ENCODE measurements at regions of chr10 and their contacts with region 1.

Region 1: DNA sequence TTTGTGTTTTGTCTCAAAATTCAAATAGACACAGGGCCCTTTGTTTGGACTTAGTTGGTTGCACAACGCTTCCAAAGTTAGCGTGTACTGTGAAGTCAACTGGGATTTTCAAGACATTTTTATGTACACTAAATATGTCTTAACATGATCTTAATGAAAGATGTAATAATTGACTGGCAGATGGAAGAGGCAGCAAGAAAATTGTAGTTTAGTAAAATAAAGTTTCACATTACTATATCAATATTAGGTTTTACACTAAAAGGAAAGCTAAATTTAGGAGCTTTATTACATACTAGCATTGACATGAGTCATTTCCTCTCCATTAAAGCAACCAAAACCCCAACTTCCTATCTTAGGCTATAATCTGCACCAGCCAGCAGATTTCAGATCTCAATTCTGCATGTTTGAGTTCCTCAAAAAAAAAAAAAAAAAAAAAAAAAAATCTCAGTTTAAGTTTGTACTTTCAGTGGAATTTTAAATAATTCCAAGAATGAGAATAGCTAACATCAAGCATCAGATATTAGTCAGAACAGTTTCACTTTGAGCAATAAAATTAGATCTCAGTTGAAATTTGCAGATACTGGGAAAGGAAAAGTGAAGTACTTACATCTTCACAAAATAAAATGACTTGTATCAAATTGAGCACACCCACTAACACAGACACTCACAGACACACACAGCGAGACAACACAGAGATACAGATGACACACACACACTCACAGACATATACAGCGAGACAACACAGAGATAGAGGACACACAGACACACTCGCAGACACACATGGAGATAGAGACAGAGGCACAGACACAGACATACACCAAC is 346.6 kb upstream of the KLF6 start:
- DNase-seq: peak; percentile 43
- H3K4me3 Mint-ChIP-seq: no peak overlapping the region
- H3K27ac Mint-ChIP-seq: no peak overlapping the region
- H3K4me1 Mint-ChIP-seq: peaks cover 24% of the 10 kb centered on the region
- H3K27me3 Mint-ChIP-seq: no peaks in the 10 kb centered on the region

Region 2: GRCh38 chr10:3095373-3096139 is 1036.1 kb before region 1 on chr10:
- CTCF ChIA-PET with region 1: no interaction called
- intact Hi-C with region 1: loop called (anchors 1 kb)
- DNase-seq: peak; percentile 79
- H3K4me3 Mint-ChIP-seq: peak overlapping the region; percentile 27
- H3K27ac Mint-ChIP-seq: peak overlapping the region; percentile 81
- H3K4me1 Mint-ChIP-seq: peaks cover 56% of the 10 kb centered on the region
- H3K27me3 Mint-ChIP-seq: no peaks in the 10 kb centered on the region

Region 3: DNA sequence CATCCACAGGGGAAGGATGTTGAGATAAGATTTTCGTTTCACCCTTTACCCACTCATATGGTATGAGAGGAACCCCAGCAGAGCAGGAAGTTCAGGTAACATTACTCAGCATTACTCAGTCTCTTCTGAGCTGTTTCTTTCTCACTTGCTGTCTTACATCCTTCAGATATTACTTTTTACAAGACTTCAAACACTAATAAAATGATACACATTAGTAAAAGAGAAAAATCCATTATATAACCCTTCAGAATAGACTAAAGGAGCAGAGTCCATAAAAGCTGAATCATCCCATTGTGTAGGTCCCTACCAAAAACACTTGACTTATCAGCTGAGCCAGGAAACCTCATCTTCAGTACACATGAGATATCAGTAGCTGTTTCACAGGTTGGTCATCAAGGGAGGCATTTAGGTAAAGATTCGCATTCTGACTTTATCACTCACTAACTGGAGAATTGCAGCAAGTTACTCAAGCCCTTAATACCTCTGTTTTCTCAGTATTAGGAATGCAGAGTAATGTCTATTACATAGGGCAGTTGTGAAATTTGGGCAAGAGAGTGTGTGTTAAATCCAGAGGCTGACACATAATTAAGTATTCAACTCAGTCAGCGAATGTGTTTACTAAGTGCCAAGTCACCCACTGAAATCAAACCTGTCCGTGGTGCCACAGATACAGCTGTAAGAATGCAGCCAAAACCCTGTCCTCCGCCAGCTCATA is 391.3 kb before region 1 on chr10:
- CTCF ChIA-PET with region 1: no interaction called
- intact Hi-C with region 1: loop called (anchors 1 kb)
- DNase-seq: no peak
- H3K4me3 Mint-ChIP-seq: no peak overlapping the region
- H3K27ac Mint-ChIP-seq: peak overlapping the region; percentile 59
- H3K4me1 Mint-ChIP-seq: peaks cover 31% of the 10 kb centered on the region
- H3K27me3 Mint-ChIP-seq: no peaks in the 10 kb centered on the region

Region 4: GRCh38 chr10:3867454-3868270 is 264.0 kb before region 1 on chr10:
- CTCF ChIA-PET with region 1: no interaction called
- intact Hi-C with region 1: loop called (anchors 1 kb)
- DNase-seq: peak; percentile 46
- H3K4me3 Mint-ChIP-seq: no peak overlapping the region
- H3K27ac Mint-ChIP-seq: peak overlapping the region; percentile 70
- H3K4me1 Mint-ChIP-seq: peaks cover 53% of the 10 kb centered on the region
- H3K27me3 Mint-ChIP-seq: no peaks in the 10 kb centered on the region

Region 5: GRCh38 chr10:3980660-3981059 is 151.0 kb before region 1 on chr10:
- CTCF ChIA-PET with region 1: no interaction called
- intact Hi-C with region 1: loop called (anchors 2 kb)
- DNase-seq: no peak
- H3K4me3 Mint-ChIP-seq: no peak overlapping the region
- H3K27ac Mint-ChIP-seq: no peak overlapping the region
- H3K4me1 Mint-ChIP-seq: peaks cover 31% of the 10 kb centered on the region
- H3K27me3 Mint-ChIP-seq: no peaks in the 10 kb centered on the region

Region 6: GRCh38 chr10:5293691-5294550 is 1162.3 kb after region 1 on chr10:
- CTCF ChIA-PET with region 1: no interaction called
- intact Hi-C with region 1: loop called (anchors 5 kb)
- DNase-seq: peak; percentile 92
- H3K4me3 Mint-ChIP-seq: peak overlapping the region; percentile 85
- H3K27ac Mint-ChIP-seq: peak overlapping the region; percentile 96
- H3K4me1 Mint-ChIP-seq: peaks cover 73% of the 10 kb centered on the region
- H3K27me3 Mint-ChIP-seq: no peaks in the 10 kb centered on the region